ENCODE measurements at regions of chr1 and their contacts with region 1.

Region 1: GRCh38 chr1:6414443-6414844 is 5.3 kb downstream of the HES2 start:
- DNase-seq: peak; percentile 86
- ATAC-seq: peak; percentile 89
- H3K4me3 Mint-ChIP-seq: peak overlapping the region; percentile 47
- H3K27ac Mint-ChIP-seq: peak overlapping the region; percentile 95
- H3K4me1 Mint-ChIP-seq: peaks cover 20% of the 10 kb centered on the region
- H3K27me3 Mint-ChIP-seq: peaks cover 78% of the 10 kb centered on the region
- CTCF ChIP-seq: peak; percentile 62; the same call in 1 of the 2 replicates

Region 2: DNA sequence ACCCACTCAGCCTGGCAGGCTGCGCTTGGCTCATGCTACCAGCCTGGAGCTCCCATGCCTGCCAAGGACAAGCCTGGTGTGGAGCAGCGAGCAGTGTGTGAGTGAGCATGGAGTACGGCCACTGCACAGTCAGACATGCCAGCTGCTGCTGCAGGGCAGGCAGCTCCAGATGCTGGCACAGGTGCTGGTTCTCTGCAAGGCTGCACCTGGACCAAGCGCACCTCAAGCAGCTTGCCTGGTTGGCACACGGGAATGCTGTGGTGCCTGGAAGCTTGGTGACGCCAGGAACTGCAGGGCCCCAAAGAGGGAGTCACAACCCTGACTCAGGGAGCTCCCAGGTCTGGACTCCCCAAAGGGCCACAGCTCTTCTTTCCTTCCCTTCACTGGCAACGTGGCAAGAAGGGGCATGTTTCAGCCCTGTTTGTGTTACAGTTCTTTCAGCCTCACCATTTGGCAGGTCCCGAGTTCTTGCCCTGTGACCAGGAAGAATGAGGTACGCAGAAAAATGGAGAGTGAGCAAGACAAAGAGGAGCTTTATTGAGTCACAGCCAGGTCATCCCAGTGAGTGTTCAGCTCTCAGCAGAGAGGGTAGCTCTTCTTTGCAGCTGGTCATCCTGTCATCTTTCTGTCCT is 46.9 kb before region 1 on chr1:
- CTCF ChIA-PET with region 1: interaction called, 17 read pairs
- POLR2A ChIA-PET with region 1: no interaction called
- DNase-seq: no peak
- ATAC-seq: no peak
- H3K4me3 Mint-ChIP-seq: no peak overlapping the region
- H3K27ac Mint-ChIP-seq: peak overlapping the region; percentile 45; the same call in 1 of the 2 replicates
- H3K4me1 Mint-ChIP-seq: peaks cover 10% of the 10 kb centered on the region
- H3K27me3 Mint-ChIP-seq: no peaks in the 10 kb centered on the region
- CTCF ChIP-seq: no peak

Region 3: DNA sequence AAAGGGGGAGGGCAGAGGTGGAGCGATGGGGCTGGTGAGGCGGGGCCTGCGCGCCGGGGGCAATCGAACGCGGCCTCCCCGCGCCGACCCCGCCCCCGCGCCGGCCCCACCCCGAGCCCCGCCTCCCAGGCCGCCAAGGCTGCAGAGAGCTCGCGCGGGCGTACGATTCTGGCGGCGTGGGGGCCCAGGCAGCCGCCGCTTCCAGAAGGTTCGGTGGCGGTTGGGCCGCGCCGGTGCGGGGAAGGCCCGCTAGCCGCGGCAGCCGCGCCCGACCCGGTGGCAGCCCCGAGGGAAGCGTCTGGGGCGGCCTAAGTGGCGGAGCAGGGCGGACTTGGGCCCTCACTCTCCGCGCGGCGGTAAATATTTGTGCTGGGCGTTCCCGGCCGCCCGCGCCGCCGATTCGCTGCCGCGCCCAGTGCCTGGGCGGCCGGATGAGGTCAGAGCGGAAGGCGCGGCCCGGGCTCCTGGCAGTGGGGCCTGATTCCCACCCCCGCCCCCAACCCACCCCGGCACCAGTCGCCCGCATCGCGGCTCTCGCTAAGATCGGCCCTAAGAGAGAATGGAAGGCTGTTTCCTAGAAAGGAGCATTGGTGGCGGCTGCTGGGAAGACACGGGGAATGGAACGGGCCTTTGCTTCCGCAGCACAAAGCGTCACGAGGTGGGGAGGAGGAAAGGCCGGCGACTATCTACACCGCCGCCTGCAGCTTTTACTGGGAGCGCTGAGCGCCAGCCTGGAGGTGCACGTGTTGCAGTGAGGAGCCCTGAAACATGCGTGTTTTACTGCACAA is 20.9 kb before region 1 on chr1 and contains the start of gene ACOT7:
- CTCF ChIA-PET with region 1: interaction called, 35 read pairs
- POLR2A ChIA-PET with region 1: interaction called, 3 read pairs
- DNase-seq: peak; percentile 89
- ATAC-seq: peak; percentile 88
- H3K4me3 Mint-ChIP-seq: peak within 1 kb of the TSS; percentile 80
- H3K27ac Mint-ChIP-seq: peak within 1 kb of the TSS; percentile 95
- H3K4me1 Mint-ChIP-seq: peaks cover 18% of the 10 kb centered on the region
- H3K27me3 Mint-ChIP-seq: peaks cover 9% of the 10 kb centered on the region
- CTCF ChIP-seq: no peak
- total RNA-seq, gene ACOT7: 133 to 151 TPM (median 137 TPM) in 3 replicates

Region 4: GRCh38 chr1:6401673-6402072 is 12.8 kb before region 1 on chr1:
- CTCF ChIA-PET with region 1: interaction called, 27 read pairs
- POLR2A ChIA-PET with region 1: interaction called, 3 read pairs
- DNase-seq: no peak
- ATAC-seq: no peak
- H3K4me3 Mint-ChIP-seq: no peak overlapping the region
- H3K27ac Mint-ChIP-seq: no peak overlapping the region
- H3K4me1 Mint-ChIP-seq: no peaks in the 10 kb centered on the region
- H3K27me3 Mint-ChIP-seq: peaks cover 20% of the 10 kb centered on the region
- CTCF ChIP-seq: no peak

Measured in WTC11 (cell line).